Caco-2 (cell line): ENCODE measurements at regions of chr1 and their contacts with region 1.

Region 1: DNA sequence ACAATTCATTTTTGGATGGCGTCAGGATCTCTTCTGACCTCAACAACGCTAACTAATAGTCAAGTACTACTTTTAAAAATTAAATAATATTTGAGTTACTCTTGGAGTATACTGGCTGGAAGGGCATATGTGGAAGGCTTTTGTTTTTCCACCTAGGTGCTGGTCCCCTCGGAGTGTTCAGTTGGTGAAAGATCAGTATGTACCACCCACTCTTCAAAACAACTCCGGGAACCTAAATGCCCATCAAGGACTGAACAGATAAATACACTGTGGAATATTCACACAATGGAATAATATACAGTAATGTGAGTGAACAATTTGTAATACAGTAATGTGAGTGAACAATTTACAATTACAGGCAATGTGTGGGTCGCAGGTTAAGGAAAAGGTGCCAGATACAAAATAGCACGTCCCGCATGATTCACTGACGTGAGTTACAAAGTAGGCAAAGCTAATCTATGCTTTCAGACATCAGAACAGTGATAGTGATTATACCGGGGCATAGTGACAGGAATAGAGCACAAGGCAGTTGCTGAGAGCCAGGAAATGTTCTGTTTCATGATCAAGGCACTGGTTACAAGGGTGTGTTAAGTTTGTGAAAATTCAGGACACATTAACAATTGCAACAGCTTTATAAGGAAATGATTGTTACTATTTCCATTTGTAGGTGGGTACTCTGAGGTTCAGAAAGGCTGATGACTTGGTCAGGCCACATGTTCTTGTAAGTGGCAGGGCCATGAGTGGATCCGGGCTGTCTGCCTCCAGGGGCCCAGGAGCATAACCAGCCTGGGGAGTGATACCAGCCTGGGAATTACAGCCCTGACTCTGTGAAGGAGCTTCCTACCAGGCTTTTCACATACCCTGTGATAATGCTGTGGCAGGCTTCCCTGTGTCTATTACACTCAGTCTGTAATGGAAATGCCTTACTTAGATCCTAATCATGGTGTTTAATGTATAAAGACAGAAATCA is 59.3 kb upstream of the ABCD3 start:
- DNase-seq: no peak
- H3K4me3 ChIP-seq: no peak overlapping the region
- H3K4me3 Mint-ChIP-seq: no peak overlapping the region
- H3K27ac Mint-ChIP-seq: no peak overlapping the region
- H3K4me1 ChIP-seq: peaks cover 37% of the 10 kb centered on the region
- H3K4me1 Mint-ChIP-seq: peaks cover 25% of the 10 kb centered on the region
- H3K27me3 ChIP-seq: no peaks in the 10 kb centered on the region
- H3K27me3 Mint-ChIP-seq: no peaks in the 10 kb centered on the region
- CTCF ChIP-seq: no peak

Region 2: DNA sequence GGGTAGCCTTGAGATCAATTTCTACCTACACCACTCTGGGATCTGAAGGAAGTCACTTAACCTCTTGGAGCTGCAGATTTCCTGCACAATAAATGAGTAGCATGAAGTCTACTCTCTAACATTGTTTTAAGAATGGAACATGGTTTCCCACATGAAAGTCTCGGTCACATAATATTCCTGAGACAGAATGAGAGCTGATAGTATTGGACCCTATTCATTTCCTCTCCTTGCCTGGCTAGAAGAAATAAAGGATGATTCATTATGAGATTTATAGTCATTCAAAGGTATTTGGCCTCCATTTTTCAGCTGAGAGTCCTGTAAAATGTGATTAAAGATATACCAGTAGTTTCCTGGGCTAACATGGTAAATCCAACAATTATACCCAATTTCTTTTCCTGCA is 178.3 kb before region 1 on chr1:
- CTCF ChIA-PET with region 1: no interaction called
- POLR2A ChIA-PET with region 1: no interaction called
- intact Hi-C with region 1: no loop called
- DNase-seq: no peak
- H3K4me3 ChIP-seq: no peak overlapping the region
- H3K4me3 Mint-ChIP-seq: no peak overlapping the region
- H3K27ac Mint-ChIP-seq: no peak overlapping the region
- H3K4me1 ChIP-seq: no peaks in the 10 kb centered on the region
- H3K4me1 Mint-ChIP-seq: peaks cover 13% of the 10 kb centered on the region
- H3K27me3 ChIP-seq: no peaks in the 10 kb centered on the region
- H3K27me3 Mint-ChIP-seq: no peaks in the 10 kb centered on the region
- CTCF ChIP-seq: no peak

Region 3: DNA sequence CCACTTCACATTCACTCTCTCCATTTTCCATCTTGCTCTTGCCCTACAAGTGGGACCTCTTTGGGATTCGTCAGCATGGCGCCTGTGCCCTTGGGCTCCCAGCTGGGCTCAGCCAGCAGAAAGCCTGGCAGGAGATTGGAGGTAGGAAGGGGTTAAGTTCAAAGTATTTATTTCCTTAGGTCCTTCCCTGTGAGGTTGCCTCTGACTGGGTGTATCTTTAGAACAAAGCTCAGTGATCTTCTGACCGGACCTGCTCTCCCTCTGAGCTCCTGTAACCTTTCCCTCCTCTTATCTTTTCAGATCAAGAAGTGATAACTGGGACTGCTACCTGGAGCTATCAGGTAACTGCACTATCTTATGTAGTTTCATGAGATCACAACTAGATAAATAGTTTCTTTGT is 16.5 kb before region 1 on chr1:
- CTCF ChIA-PET with region 1: interaction called, 6 read pairs
- POLR2A ChIA-PET with region 1: interaction called, 5 read pairs
- intact Hi-C with region 1: loop called (anchors 1 kb)
- DNase-seq: peak; percentile 74 to 83
- H3K4me3 ChIP-seq: no peak overlapping the region
- H3K4me3 Mint-ChIP-seq: peak overlapping the region; percentile 47
- H3K27ac Mint-ChIP-seq: peak overlapping the region; percentile 80
- H3K4me1 ChIP-seq: peaks cover 56% of the 10 kb centered on the region
- H3K4me1 Mint-ChIP-seq: peaks cover 57% of the 10 kb centered on the region
- H3K27me3 ChIP-seq: no peaks in the 10 kb centered on the region
- H3K27me3 Mint-ChIP-seq: no peaks in the 10 kb centered on the region
- CTCF ChIP-seq: no peak

Region 4: DNA sequence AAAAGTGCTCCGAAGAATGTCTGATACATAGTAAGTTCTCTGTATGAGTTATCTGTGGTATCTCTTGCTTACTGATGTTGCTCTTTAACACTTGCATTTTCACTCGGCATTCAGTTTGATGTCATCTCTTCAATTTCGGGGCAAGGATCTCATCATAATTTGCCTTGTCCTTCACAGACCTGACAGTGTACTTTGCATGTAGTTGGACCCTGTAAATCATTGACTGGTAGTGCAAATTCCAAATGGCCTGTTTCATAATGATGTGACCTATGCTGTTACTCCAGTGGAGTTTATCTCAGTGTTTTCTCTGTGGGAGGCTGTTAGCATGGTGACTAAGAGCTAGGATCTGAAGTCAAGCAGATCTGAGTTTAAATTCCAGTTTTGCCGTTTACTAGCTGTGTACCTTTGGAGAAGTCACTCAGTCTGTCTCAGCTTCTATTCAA is 25.1 kb after region 1 on chr1:
- CTCF ChIA-PET with region 1: no interaction called
- POLR2A ChIA-PET with region 1: interaction called, 5 read pairs
- intact Hi-C with region 1: loop called (anchors 1 kb)
- DNase-seq: peak; percentile 81 to 82
- H3K4me3 ChIP-seq: no peak overlapping the region
- H3K4me3 Mint-ChIP-seq: peak overlapping the region; percentile 63
- H3K27ac Mint-ChIP-seq: peak overlapping the region; percentile 90
- H3K4me1 ChIP-seq: peaks cover 66% of the 10 kb centered on the region
- H3K4me1 Mint-ChIP-seq: peaks cover 20% of the 10 kb centered on the region
- H3K27me3 ChIP-seq: no peaks in the 10 kb centered on the region
- H3K27me3 Mint-ChIP-seq: no peaks in the 10 kb centered on the region
- CTCF ChIP-seq: no peak

Region 5: DNA sequence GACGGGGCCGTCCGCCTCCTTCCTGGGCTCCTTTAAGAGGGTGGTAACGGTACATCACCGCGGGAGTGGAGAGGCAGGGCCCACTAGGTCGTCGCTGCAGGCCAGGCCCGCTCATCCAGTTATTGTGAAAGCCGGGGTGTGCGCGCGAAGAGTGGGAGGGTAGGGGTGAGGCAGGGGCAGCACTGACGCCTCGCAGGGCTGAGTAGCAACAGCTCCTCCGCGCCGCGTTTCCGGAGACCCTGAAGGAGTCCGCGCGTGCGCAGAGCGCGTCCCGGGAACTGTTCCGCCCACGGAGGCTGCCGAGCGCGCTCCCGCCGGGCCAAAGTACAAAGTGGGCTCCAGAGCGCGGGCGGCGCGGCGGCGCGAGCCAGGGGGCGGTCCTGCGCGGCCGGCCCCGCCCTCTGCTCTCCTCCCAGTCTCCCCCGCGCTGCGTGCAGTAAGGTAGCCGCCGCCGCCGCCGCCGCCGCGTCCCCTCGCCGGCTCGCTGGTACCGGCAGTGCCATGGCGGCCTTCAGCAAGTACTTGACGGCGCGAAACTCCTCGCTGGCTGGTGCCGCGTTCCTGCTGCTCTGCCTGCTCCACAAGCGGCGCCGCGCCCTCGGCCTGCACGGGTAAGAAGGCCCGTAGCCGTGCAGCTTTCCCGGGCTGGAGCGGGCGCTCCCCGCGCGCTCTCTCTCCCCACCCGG is 59.2 kb after region 1 on chr1 and contains the start of gene ABCD3:
- CTCF ChIA-PET with region 1: no interaction called
- POLR2A ChIA-PET with region 1: interaction called, 3 read pairs
- intact Hi-C with region 1: loop called (anchors 1 kb)
- DNase-seq: peak; percentile 95
- H3K4me3 ChIP-seq: peak within 1 kb of the TSS; percentile 87
- H3K4me3 Mint-ChIP-seq: no peak within 1 kb of the TSS
- H3K27ac Mint-ChIP-seq: peak within 1 kb of the TSS; percentile 74
- H3K4me1 ChIP-seq: peaks cover 27% of the 10 kb centered on the region
- H3K4me1 Mint-ChIP-seq: peaks cover 15% of the 10 kb centered on the region
- H3K27me3 ChIP-seq: no peaks in the 10 kb centered on the region
- H3K27me3 Mint-ChIP-seq: no peaks in the 10 kb centered on the region
- CTCF ChIP-seq: no peak
- total RNA-seq, gene ABCD3: 93.4 and 94.4 TPM in 2 replicates

Region 6: GRCh38 chr1:94425821-94426484 is 67.0 kb after region 1 on chr1:
- CTCF ChIA-PET with region 1: no interaction called
- POLR2A ChIA-PET with region 1: no interaction called
- intact Hi-C with region 1: loop called (anchors 2 kb)
- DNase-seq: no peak
- H3K4me3 ChIP-seq: peak overlapping the region; percentile 10; the same call in 1 of the 2 replicates
- H3K4me3 Mint-ChIP-seq: peak overlapping the region; percentile 59
- H3K27ac Mint-ChIP-seq: no peak overlapping the region
- H3K4me1 ChIP-seq: peaks cover 41% of the 10 kb centered on the region
- H3K4me1 Mint-ChIP-seq: peaks cover 25% of the 10 kb centered on the region
- H3K27me3 ChIP-seq: no peaks in the 10 kb centered on the region
- H3K27me3 Mint-ChIP-seq: no peaks in the 10 kb centered on the region
- CTCF ChIP-seq: no peak